ENCODE measurements at regions of chr12 and their contacts with region 1.

Region 1: DNA sequence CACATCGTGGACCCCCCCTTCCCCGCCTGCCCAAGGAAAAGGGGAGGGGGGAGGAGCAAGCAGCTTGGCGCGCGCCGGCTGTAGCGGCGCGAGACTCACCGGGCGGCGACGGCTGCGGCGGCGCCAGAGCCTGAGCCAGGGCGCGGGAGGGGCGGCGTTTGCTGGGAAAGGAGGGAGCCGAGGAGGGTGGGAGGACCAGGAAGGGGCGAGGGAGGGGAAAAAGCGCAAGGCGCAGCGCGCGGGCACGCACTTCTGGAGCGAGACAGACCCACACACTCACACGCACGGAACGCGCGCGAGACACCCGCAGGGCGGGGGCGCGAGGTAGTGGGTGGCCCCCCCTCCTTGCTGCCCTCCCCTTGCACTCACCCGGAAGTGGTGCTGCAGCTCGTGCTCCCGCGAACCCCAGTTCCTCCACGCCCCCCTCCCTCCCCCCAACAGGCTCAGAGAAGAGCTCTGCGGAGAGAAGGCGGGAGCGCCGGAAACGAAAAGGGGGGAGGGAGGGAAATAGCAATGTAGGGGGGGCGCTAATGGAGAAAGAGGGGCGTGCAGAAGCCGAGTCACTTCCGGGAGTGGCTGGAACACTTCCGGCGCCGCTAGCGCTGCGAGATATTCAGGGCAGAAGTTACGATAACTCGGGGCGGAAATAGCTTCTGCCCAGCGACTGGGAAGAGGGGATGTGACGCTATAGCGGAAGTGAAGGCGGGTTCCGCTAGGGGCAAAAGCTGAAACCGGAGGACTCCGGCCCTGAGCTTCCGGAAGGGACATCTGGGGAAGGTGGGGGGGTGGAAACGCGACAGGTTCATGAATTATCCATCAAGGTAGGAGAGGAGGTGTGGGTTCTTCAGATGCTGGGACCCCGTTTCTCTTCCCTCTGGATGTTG is at the start of gene ZNF384:
- DNase-seq: peak; percentile 97
- ATAC-seq: peak; percentile 83
- H3K4me3 Mint-ChIP-seq: peak within 1 kb of the TSS; percentile 86
- H3K27ac Mint-ChIP-seq: peak within 1 kb of the TSS; percentile 97
- H3K4me1 Mint-ChIP-seq: peaks cover 45% of the 10 kb centered on the region
- H3K27me3 Mint-ChIP-seq: no peaks in the 10 kb centered on the region
- CTCF ChIP-seq: no peak
- total RNA-seq, gene ZNF384: 55.2 to 56.7 TPM

Region 2: DNA sequence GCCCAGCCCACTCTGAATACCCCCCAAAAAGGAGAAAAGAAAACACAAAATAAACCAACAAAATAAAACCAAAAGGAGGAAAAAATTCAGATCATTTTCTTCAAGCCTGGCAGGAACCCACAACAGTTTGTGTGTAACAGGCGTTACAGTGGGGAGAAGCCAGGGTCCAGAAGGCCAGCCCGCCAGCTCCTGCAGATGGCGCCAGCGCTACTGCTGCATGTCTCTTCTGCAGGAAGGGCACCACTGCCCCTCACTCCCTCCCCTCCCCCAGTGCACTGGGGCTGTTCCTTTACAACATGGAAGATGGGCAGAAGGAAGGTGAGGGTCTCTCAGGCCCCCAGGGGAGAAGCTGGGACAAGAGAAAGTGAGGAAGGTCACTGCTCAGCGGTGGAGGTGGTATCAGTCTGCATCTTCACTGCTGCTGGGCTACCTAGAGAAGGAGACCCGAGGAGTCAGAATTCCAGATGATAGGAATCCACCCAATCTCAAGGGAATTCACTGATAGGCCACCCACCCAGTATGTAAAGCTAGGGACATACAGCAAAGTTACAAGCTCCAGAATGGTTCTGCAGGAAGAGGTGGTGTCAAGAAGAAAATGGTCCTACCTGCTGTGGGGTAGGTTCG is 118.9 kb before region 1 on chr12:
- CTCF ChIA-PET with region 1: interaction called, 18 read pairs
- POLR2A ChIA-PET with region 1: no interaction called
- intact Hi-C with region 1: no loop called
- DNase-seq: peak; percentile 73
- ATAC-seq: peak; percentile 29
- H3K4me3 Mint-ChIP-seq: no peak overlapping the region
- H3K27ac Mint-ChIP-seq: peak overlapping the region; percentile 10
- H3K4me1 Mint-ChIP-seq: peaks cover 44% of the 10 kb centered on the region
- H3K27me3 Mint-ChIP-seq: no peaks in the 10 kb centered on the region
- CTCF ChIP-seq: peak; percentile 76

Region 3: GRCh38 chr12:6613776-6614512 is 75.3 kb before region 1 on chr12:
- CTCF ChIA-PET with region 1: interaction called, 35 read pairs
- POLR2A ChIA-PET with region 1: interaction called, 7 read pairs
- intact Hi-C with region 1: loop called (anchors 2 kb)
- DNase-seq: peak; percentile 63
- ATAC-seq: peak; percentile 38
- H3K4me3 Mint-ChIP-seq: no peak overlapping the region
- H3K27ac Mint-ChIP-seq: peak overlapping the region; percentile 68
- H3K4me1 Mint-ChIP-seq: peaks cover 46% of the 10 kb centered on the region
- H3K27me3 Mint-ChIP-seq: no peaks in the 10 kb centered on the region
- CTCF ChIP-seq: no peak

Region 4: DNA sequence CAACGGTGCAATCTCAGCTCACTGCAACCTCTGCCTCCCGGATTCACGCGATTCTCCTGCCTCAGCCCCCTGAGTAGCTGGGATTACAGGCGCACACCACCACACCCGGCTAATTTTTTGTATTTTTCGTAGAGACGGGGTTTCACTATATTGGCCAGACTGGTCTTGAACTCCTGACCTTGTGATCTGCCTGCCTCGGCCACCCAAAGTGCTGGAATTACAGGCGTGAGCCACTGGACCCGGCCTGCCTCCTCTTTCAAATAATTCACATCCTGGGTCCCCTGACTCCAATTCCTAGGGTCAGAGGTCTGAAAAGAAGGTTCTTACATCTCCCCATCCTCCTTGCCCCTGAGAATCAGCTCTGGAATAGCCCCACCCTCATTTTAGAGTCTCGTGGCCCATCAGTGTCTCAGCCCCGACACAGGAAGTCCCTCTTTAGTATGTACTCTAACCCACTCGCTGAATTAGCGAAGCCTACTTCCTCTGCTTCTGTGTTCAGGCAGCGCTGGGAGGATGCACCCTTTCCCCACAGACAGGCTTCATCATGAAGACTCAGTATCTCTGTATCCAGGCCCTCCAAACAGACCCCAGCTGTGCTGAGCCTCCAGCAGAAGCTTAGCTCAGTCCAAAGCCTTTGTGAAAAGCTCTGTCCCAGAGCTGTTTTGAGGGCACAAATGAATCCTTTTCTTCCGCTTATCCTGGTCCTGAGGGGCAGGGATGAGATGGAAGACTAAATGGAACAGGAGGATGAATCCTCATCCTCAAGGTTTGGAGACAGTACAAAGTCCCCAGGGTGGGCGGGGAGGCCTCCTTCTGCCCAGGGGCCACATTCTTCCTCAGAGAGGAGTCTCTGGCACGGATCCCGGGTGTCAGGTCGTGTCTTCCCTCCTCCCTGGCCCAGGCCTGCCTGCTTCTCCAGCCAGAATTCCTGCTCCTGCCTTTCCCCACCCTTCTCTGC is 56.9 kb before region 1 on chr12:
- CTCF ChIA-PET with region 1: interaction called, 10 read pairs
- POLR2A ChIA-PET with region 1: interaction called, 3 read pairs
- intact Hi-C with region 1: no loop called
- DNase-seq: peak; percentile 78
- ATAC-seq: peak; percentile 57
- H3K4me3 Mint-ChIP-seq: peak overlapping the region; percentile 78
- H3K27ac Mint-ChIP-seq: peak overlapping the region; percentile 100
- H3K4me1 Mint-ChIP-seq: peaks cover 64% of the 10 kb centered on the region
- H3K27me3 Mint-ChIP-seq: no peaks in the 10 kb centered on the region
- CTCF ChIP-seq: no peak

Region 5: GRCh38 chr12:6672143-6672542 is 17.1 kb before region 1 on chr12:
- CTCF ChIA-PET with region 1: interaction called, 27 read pairs
- POLR2A ChIA-PET with region 1: interaction called, 13 read pairs
- intact Hi-C with region 1: no loop called
- DNase-seq: no peak
- ATAC-seq: no peak
- H3K4me3 Mint-ChIP-seq: no peak overlapping the region
- H3K27ac Mint-ChIP-seq: no peak overlapping the region
- H3K4me1 Mint-ChIP-seq: no peaks in the 10 kb centered on the region
- H3K27me3 Mint-ChIP-seq: no peaks in the 10 kb centered on the region
- CTCF ChIP-seq: no peak